Cardiac septum (tissue), 1 donor: ENCODE measurements at regions of chr18 and their contacts with region 1.

Region 1: GRCh38 chr18:9474983-9475642 is at the start of gene RALBP1:
- DNase-seq: peak; percentile 100
- total RNA-seq, gene RALBP1: 51.0 TPM

Region 2: GRCh38 chr18:9147440-9148202 is 327.5 kb before region 1 on chr18:
- intact Hi-C with region 1: loop called (anchors 10 kb)
- DNase-seq: no peak

Region 3: GRCh38 chr18:9334329-9334972 is 140.7 kb before region 1 on chr18 and contains the start of gene TWSG1:
- intact Hi-C with region 1: loop called (anchors 10 kb)
- DNase-seq: peak; percentile 97
- total RNA-seq, gene TWSG1: 19.2 TPM

Region 4: DNA sequence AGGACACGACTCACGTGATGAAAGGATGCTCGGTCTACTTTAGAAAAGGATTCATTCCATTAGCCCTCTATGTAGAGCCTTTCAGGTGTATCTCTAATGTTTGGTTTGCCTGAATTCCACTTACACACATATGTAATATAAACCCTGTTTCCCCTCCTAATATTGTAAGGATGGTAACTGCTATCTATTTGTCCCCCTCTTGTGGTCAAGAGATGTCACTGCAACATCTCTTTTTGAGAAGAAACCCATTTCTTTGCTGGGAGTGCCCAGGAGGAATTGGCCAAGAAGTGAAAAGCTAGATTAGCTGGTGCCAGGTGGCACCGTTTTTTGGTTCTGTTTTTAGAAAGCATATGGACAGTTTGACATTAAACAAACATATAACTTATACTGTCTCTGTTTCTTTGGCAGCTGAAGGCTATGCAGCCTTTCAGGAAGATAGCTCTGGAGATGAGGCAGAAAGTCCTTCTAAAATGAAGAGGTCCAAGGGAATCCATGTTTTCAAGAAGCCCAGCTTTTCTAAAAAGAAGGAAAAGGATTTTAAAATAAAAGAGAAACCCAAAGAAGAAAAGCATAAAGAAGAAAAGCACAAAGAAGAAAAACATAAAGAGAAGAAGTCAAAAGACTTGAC is 41.4 kb after region 1 on chr18:
- intact Hi-C with region 1: loop called (anchors 5 kb)
- DNase-seq: no peak